Panc1 (cell line): ENCODE measurements at regions of chr4 and their contacts with region 1.

Region 1: GRCh38 chr4:81307991-81308390 is 93.0 kb upstream of the PRKG2 start:
- DNase-seq: no peak
- ATAC-seq: no peak
- H3K4me3 ChIP-seq: no peak overlapping the region
- H3K27ac ChIP-seq: no peak overlapping the region
- H3K4me1 ChIP-seq: no peaks in the 10 kb centered on the region
- H3K27me3 ChIP-seq: no peaks in the 10 kb centered on the region
- CTCF ChIP-seq: no peak

Region 2: GRCh38 chr4:80913381-80913780 is 394.6 kb before region 1 on chr4:
- CTCF ChIA-PET with region 1: no interaction called
- POLR2A ChIA-PET with region 1: no interaction called
- in situ Hi-C with region 1: no loop called
- intact Hi-C with region 1: no loop called
- DNase-seq: no peak
- ATAC-seq: no peak
- H3K4me3 ChIP-seq: no peak overlapping the region
- H3K27ac ChIP-seq: no peak overlapping the region
- H3K4me1 ChIP-seq: no peaks in the 10 kb centered on the region
- H3K27me3 ChIP-seq: no peaks in the 10 kb centered on the region
- CTCF ChIP-seq: no peak

Region 3: DNA sequence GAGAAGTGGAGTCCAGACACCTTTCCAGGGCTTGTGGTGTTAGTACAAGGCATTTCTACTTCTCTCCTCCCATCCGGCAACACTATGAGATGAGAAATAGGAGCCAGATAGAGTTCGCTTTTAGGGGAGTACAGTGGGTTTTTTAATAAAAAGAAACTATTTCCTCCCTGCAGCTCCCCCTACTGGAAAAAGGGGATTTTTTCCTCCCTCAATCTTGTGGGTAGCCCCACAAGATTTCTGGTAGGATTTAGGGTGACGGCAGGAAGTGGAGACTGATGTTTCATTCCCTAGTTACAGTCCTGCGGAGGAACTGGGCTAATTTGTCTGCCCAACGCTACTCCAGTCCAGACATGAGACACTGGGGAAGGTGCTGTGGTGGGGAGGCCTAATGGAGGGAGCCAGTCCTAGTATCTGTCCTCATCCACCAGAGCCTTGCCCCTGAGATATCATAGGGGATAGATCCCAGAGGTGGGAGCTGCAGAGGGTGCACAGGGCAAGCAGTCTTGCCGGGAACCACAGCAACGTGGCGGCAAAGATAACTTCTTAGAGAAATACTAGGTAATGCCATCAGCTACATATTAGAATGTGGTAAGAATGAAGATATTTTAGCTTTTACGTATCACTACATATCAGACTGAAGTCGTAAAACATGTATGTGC is 47.4 kb before region 1 on chr4:
- CTCF ChIA-PET with region 1: no interaction called
- POLR2A ChIA-PET with region 1: no interaction called
- in situ Hi-C with region 1: no loop called
- intact Hi-C with region 1: loop called (anchors 2 kb)
- DNase-seq: no peak
- ATAC-seq: no peak
- H3K4me3 ChIP-seq: no peak overlapping the region
- H3K27ac ChIP-seq: no peak overlapping the region
- H3K4me1 ChIP-seq: no peaks in the 10 kb centered on the region
- H3K27me3 ChIP-seq: no peaks in the 10 kb centered on the region
- CTCF ChIP-seq: peak; percentile 29